ENCODE measurements at regions of chr11 and their contacts with region 1.

Region 1: GRCh38 chr11:47426061-47426956 is at the start of gene PSMC3:
- DNase-seq: peak; percentile 93
- ATAC-seq: peak; percentile 86
- H3K4me3 ChIP-seq: peak within 1 kb of the TSS; percentile 73 to 99 (median 97)
- H3K27ac ChIP-seq: peak within 1 kb of the TSS; percentile 89
- H3K4me1 ChIP-seq: peaks cover 37% of the 10 kb centered on the region
- H3K27me3 ChIP-seq: no peaks in the 10 kb centered on the region; a peak in 1 of 5 replicates
- CTCF ChIP-seq: no peak
- EP300 ChIP-seq: peak in 1 of 2 experiments; percentile 46; a peak in 2 of 4 replicates
- POLR2A ChIP-seq: peak; percentile 64 to 77
- RAD21 ChIP-seq: no peak
- total RNA-seq, gene PSMC3: 214 and 279 TPM in 2 replicates

Region 2: GRCh38 chr11:47415949-47416472 is 10.3 kb before region 1 on chr11:
- CTCF ChIA-PET with region 1: no interaction called
- POLR2A ChIA-PET with region 1: interaction called, 33 read pairs
- in situ Hi-C with region 1: no loop called
- intact Hi-C with region 1: no loop called
- DNase-seq: no peak
- ATAC-seq: peak; percentile 14
- H3K4me3 ChIP-seq: no peak overlapping the region
- H3K27ac ChIP-seq: no peak overlapping the region
- H3K4me1 ChIP-seq: no peaks in the 10 kb centered on the region
- H3K27me3 ChIP-seq: no peaks in the 10 kb centered on the region
- CTCF ChIP-seq: no peak
- EP300 ChIP-seq: no peak
- POLR2A ChIP-seq: no peak
- RAD21 ChIP-seq: no peak

Region 3: DNA sequence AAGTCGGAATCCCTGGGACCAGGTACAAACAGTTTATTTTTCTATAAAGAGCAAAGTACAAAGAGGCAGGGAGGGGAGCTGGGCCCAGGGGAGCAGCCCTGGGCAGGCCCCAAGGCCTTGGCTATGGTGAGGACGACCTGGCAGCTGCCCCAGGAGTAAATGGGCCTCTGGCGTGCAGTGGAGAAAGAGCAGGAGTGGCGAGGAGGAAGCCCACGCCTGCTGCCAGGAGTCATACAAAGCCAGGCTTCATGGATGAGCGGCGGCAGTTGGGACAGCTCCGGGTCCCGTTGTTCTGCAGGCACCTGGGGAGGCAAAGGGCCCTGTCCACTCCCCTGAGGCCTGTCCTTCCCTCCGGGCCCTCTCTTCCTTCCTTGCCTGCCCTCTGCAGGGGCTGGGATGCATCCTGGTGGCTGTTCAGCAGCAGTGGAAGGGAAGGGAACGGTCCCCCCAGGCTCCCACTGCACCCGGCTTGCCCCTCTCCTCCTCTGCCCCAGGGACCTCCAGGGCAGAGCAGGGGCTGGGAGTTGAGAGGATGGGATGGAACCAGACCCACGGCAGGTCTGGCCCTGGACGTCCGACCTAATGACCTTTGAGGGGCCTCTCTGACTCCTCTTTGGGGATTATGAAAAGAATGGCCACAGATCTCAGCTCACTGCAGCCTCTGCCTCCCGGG is 11.6 kb after region 1 on chr11:
- CTCF ChIA-PET with region 1: no interaction called
- POLR2A ChIA-PET with region 1: interaction called, 68 read pairs
- in situ Hi-C with region 1: no loop called
- intact Hi-C with region 1: no loop called
- DNase-seq: peak; percentile 68
- ATAC-seq: peak; percentile 84
- H3K4me3 ChIP-seq: peak overlapping the region; percentile 70 to 80 (median 78)
- H3K27ac ChIP-seq: peak overlapping the region; percentile 97
- H3K4me1 ChIP-seq: peaks cover 73% of the 10 kb centered on the region
- H3K27me3 ChIP-seq: no peaks in the 10 kb centered on the region; a peak in 1 of 5 replicates
- CTCF ChIP-seq: peak; percentile 48
- EP300 ChIP-seq: 0 out of 4 replicates have a peak, but pooled peaks of 1 of the 2 experiments have one; percentile 48
- POLR2A ChIP-seq: peak; percentile 57 to 78
- RAD21 ChIP-seq: peak; percentile 55; the same call in 1 of the 2 replicates

Measured in HepG2 (cell line).